ENCODE measurements at regions of chr9 and their contacts with region 1.

Region 1: GRCh38 chr9:96875461-96876364 is 21.4 kb upstream of the ZNF782 start:
- DNase-seq: peak; percentile 82
- ATAC-seq: peak; percentile 81
- H3K4me3 Mint-ChIP-seq: peak overlapping the region; percentile 76
- H3K27ac Mint-ChIP-seq: peak overlapping the region; percentile 69
- H3K4me1 Mint-ChIP-seq: peaks cover 28% of the 10 kb centered on the region
- H3K27me3 Mint-ChIP-seq: peaks cover 46% of the 10 kb centered on the region

Region 2: DNA sequence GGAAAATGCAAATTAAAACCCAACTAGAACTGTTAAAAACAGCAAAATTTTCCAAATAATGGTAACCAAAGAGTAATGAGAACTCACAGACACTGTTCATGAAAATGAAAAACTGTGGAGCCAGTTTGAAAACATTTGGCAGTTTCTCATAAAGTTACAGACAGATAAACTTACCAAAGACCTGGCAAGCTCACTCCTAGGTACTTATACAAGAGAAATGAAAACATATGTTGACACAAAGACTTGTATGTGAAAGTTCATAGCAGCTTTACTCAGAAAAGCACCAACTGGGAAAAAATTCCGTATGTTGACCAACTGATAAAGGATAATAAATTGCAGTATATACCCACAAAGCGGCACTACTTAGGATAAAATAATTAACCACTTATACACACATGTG is 31.7 kb before region 1 on chr9:
- CTCF ChIA-PET with region 1: no interaction called
- DNase-seq: no peak
- ATAC-seq: no peak
- H3K4me3 Mint-ChIP-seq: no peak overlapping the region
- H3K27ac Mint-ChIP-seq: no peak overlapping the region
- H3K4me1 Mint-ChIP-seq: no peaks in the 10 kb centered on the region
- H3K27me3 Mint-ChIP-seq: no peaks in the 10 kb centered on the region

Region 3: GRCh38 chr9:96854073-96854876 is 21.4 kb before region 1 on chr9 and contains the start of gene ZNF782:
- CTCF ChIA-PET with region 1: interaction called, 40 read pairs
- DNase-seq: peak; percentile 92
- ATAC-seq: peak; percentile 96
- H3K4me3 Mint-ChIP-seq: peak within 1 kb of the TSS; percentile 98
- H3K27ac Mint-ChIP-seq: peak within 1 kb of the TSS; percentile 97
- H3K4me1 Mint-ChIP-seq: peaks cover 31% of the 10 kb centered on the region
- H3K27me3 Mint-ChIP-seq: peaks cover 23% of the 10 kb centered on the region
- total RNA-seq, gene ZNF782: 4.9 to 5.0 TPM

Region 4: DNA sequence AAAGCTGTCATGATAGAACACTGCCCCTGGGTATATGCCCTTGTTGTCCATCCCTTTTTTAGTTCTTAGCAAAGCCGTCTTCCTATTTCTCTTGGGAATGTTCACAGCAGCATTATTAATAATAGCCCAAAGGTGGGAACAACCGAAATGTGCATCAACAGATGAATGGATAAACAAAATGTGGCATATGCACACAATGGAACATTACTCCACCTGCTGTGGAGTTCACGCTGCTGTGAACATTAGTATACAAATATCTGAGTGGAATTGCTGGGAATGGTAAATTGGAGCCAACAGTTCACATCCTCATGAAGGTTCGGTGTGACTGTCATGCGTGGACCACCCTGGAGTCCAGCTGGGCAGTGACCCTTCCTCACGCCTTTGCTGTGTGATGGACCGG is 16.4 kb after region 1 on chr9:
- CTCF ChIA-PET with region 1: no interaction called
- DNase-seq: no peak
- ATAC-seq: no peak
- H3K4me3 Mint-ChIP-seq: no peak overlapping the region
- H3K27ac Mint-ChIP-seq: no peak overlapping the region
- H3K4me1 Mint-ChIP-seq: no peaks in the 10 kb centered on the region
- H3K27me3 Mint-ChIP-seq: no peaks in the 10 kb centered on the region